ENCODE measurements at regions of chr13 and their contacts with region 1.

Region 1: GRCh38 chr13:85797311-85797710 is 1.9 kb downstream of the SLITRK6 start:
- DNase-seq: no peak

Region 2: DNA sequence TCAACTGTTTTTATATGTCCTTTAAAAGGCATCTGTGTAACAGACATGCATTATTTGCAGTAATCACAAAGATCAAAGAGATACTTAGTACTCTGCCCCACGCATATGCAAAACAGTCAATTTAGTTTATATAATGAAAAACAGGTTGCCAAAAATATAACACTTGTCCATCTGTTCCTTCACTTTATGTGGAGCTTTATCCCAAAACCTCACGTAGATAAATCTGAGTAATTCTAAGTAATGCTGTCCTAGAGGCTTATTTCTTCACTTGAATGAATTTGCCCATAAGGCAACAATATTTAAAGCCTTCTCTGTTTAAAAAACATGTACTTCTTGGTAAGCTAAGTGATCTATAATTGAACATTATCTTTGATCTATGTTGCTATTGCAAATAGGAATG is 22.2 kb after region 1 on chr13:
- intact Hi-C with region 1: loop called in 1 of 2 experiments (anchors 2 kb)
- DNase-seq: no peak